CD4-positive, alpha-beta memory T cell (primary cell): ENCODE measurements at regions of chr5 and their contacts with region 1.

Region 1: GRCh38 chr5:39217365-39218281 is 1.7 kb downstream of the FYB1 start:
- DNase-seq: peak; percentile 83 to 86 (median 84)
- H3K4me3 ChIP-seq: peak overlapping the region; percentile 33 to 64
- H3K4me3 Mint-ChIP-seq: peak overlapping the region; percentile 80 to 90 (median 86)
- H3K27ac ChIP-seq: peak overlapping the region; percentile 62
- H3K27ac Mint-ChIP-seq: peak overlapping the region; percentile 87 to 96 (median 93)
- H3K4me1 ChIP-seq: peaks cover 68% of the 10 kb centered on the region
- H3K4me1 Mint-ChIP-seq: peaks cover 54 to 71% (median 65%) of the 10 kb centered on the region in 4 donors
- H3K27me3 ChIP-seq: no peaks in the 10 kb centered on the region
- H3K27me3 Mint-ChIP-seq: no peaks in the 10 kb centered on the region

Region 2: DNA sequence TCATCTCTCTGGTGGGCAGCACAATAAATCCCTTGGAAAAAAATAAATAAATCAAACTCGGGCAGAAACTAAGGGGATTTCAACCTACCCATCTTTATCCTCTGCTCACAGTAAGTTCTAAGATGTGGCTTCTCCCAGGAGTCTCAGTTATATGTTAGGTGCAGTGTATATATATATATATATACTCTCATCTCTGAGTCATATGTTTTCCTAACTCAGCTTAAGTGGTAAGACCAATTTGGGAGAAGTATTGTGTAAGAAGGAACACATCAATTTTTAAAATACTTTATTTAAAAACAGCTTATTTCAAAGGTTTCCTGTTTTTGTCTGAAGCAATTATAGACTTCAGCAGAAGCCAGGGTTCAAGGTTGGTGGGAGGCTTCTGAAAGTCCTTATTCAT is 392.1 kb before region 1 on chr5:
- CTCF ChIA-PET with region 1: no interaction called
- POLR2A ChIA-PET with region 1: no interaction called
- intact Hi-C with region 1: no loop called
- DNase-seq: no peak
- H3K4me3 ChIP-seq: no peak overlapping the region
- H3K4me3 Mint-ChIP-seq: no peak overlapping the region
- H3K27ac ChIP-seq: no peak overlapping the region
- H3K27ac Mint-ChIP-seq: no peak overlapping the region
- H3K4me1 ChIP-seq: no peaks in the 10 kb centered on the region
- H3K4me1 Mint-ChIP-seq: peaks cover 0 to 2% (median 0%) of the 10 kb centered on the region in 4 donors
- H3K27me3 ChIP-seq: no peaks in the 10 kb centered on the region
- H3K27me3 Mint-ChIP-seq: peaks cover 10 to 15% of the 10 kb centered on the region in 2 donors

Region 3: GRCh38 chr5:39117401-39117800 is 100.2 kb before region 1 on chr5:
- CTCF ChIA-PET with region 1: interaction called, 11 read pairs
- POLR2A ChIA-PET with region 1: no interaction called
- intact Hi-C with region 1: no loop called
- DNase-seq: no peak
- H3K4me3 ChIP-seq: no peak overlapping the region
- H3K4me3 Mint-ChIP-seq: no peak overlapping the region
- H3K27ac ChIP-seq: no peak overlapping the region
- H3K27ac Mint-ChIP-seq: peak overlapping the region in 6 of 7 donors; percentile 61 to 78 (median 70)
- H3K4me1 ChIP-seq: peaks cover 26% of the 10 kb centered on the region
- H3K4me1 Mint-ChIP-seq: peaks cover 20 to 44% (median 27%) of the 10 kb centered on the region in 4 donors
- H3K27me3 ChIP-seq: no peaks in the 10 kb centered on the region
- H3K27me3 Mint-ChIP-seq: no peaks in the 10 kb centered on the region

Region 4: DNA sequence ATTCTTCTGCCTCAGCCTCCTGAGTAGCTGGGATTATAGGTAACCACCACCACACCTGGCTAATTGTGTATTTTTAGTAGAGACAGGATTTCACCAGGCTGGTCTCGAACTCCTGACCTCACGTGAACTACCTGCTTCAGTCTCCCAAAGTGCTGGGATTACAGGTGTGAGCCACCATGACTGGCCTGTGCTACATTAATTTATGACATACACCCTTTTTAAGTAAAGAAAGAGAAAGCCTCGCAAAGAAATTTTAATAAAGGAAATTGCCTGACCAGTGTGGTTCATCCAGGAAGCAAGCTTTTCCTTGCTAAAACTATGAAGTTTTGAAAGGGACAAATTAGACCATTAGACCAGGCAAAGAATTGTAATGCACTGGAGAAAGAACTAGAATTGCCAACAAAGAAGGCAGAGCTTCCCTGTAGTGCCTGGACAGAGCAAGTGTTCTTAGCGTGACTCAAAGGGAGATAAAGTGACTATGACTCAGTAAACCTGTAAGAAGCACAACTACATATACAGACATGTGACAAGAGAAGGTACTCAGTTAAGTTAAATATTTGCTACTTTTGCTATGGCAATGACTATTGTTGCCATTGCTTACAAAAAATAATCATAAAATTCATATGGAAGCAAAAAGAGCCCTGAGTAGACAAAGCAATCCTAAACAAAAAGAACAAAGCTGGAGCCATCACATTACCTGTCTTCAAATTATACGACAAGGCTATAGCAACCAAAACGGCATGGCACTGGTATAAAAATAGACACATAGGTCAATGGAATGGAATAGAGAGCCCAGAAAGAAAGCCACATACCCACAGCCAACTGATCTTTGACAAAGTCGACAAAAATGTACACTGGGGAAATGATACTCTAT is 52.9 kb before region 1 on chr5:
- CTCF ChIA-PET with region 1: interaction called, 41 read pairs
- POLR2A ChIA-PET with region 1: interaction called, 1,810 read pairs
- intact Hi-C with region 1: no loop called
- DNase-seq: peak in 2 of 5 donors; percentile 37 to 62
- H3K4me3 ChIP-seq: peak overlapping the region in 1 of 2 donors; percentile 34
- H3K4me3 Mint-ChIP-seq: peak overlapping the region; percentile 42 to 83 (median 78)
- H3K27ac ChIP-seq: peak overlapping the region; percentile 54
- H3K27ac Mint-ChIP-seq: peak overlapping the region; percentile 87 to 94 (median 94)
- H3K4me1 ChIP-seq: peaks cover 100% of the 10 kb centered on the region
- H3K4me1 Mint-ChIP-seq: peaks cover 68 to 96% (median 80%) of the 10 kb centered on the region in 4 donors
- H3K27me3 ChIP-seq: no peaks in the 10 kb centered on the region
- H3K27me3 Mint-ChIP-seq: no peaks in the 10 kb centered on the region

Region 5: GRCh38 chr5:39194466-39195136 is 23.0 kb before region 1 on chr5:
- CTCF ChIA-PET with region 1: interaction called, 313 read pairs
- POLR2A ChIA-PET with region 1: interaction called, 534 read pairs
- intact Hi-C with region 1: loop called (anchors 1 kb)
- DNase-seq: no peak
- H3K4me3 ChIP-seq: peak overlapping the region; percentile 13 to 49
- H3K4me3 Mint-ChIP-seq: peak overlapping the region; percentile 84 to 92 (median 88)
- H3K27ac ChIP-seq: peak overlapping the region; percentile 59
- H3K27ac Mint-ChIP-seq: peak overlapping the region; percentile 90 to 98 (median 95)
- H3K4me1 ChIP-seq: peaks cover 77% of the 10 kb centered on the region
- H3K4me1 Mint-ChIP-seq: peaks cover 53 to 79% (median 66%) of the 10 kb centered on the region in 4 donors
- H3K27me3 ChIP-seq: no peaks in the 10 kb centered on the region
- H3K27me3 Mint-ChIP-seq: no peaks in the 10 kb centered on the region

Region 6: GRCh38 chr5:39238366-39239105 is 20.9 kb after region 1 on chr5:
- CTCF ChIA-PET with region 1: interaction called, 10 read pairs
- POLR2A ChIA-PET with region 1: interaction called, 3 read pairs
- intact Hi-C with region 1: no loop called
- DNase-seq: no peak
- H3K4me3 ChIP-seq: no peak overlapping the region
- H3K4me3 Mint-ChIP-seq: no peak overlapping the region
- H3K27ac ChIP-seq: no peak overlapping the region
- H3K27ac Mint-ChIP-seq: peak overlapping the region in 2 of 7 donors; percentile 8 to 37
- H3K4me1 ChIP-seq: no peaks in the 10 kb centered on the region
- H3K4me1 Mint-ChIP-seq: peaks cover 6 to 12% (median 9%) of the 10 kb centered on the region in 4 donors
- H3K27me3 ChIP-seq: no peaks in the 10 kb centered on the region
- H3K27me3 Mint-ChIP-seq: no peaks in the 10 kb centered on the region

Region 7: GRCh38 chr5:39264528-39264927 is 46.9 kb after region 1 on chr5:
- CTCF ChIA-PET with region 1: interaction called, 108 read pairs
- POLR2A ChIA-PET with region 1: interaction called, 20 read pairs
- intact Hi-C with region 1: no loop called
- DNase-seq: no peak
- H3K4me3 ChIP-seq: no peak overlapping the region
- H3K4me3 Mint-ChIP-seq: peak overlapping the region in 5 of 8 donors; percentile 33 to 70 (median 48)
- H3K27ac ChIP-seq: no peak overlapping the region
- H3K27ac Mint-ChIP-seq: peak overlapping the region in 4 of 7 donors; percentile 32 to 83 (median 54)
- H3K4me1 ChIP-seq: peaks cover 6% of the 10 kb centered on the region
- H3K4me1 Mint-ChIP-seq: peaks cover 6 to 17% (median 11%) of the 10 kb centered on the region in 4 donors
- H3K27me3 ChIP-seq: no peaks in the 10 kb centered on the region
- H3K27me3 Mint-ChIP-seq: no peaks in the 10 kb centered on the region

Region 8: GRCh38 chr5:39314591-39314990 is 97.0 kb after region 1 on chr5:
- CTCF ChIA-PET with region 1: no interaction called
- POLR2A ChIA-PET with region 1: no interaction called
- intact Hi-C with region 1: no loop called
- DNase-seq: no peak
- H3K4me3 ChIP-seq: no peak overlapping the region
- H3K4me3 Mint-ChIP-seq: no peak overlapping the region
- H3K27ac ChIP-seq: no peak overlapping the region
- H3K27ac Mint-ChIP-seq: no peak overlapping the region
- H3K4me1 ChIP-seq: no peaks in the 10 kb centered on the region
- H3K4me1 Mint-ChIP-seq: peaks cover 0 to 3% (median 0%) of the 10 kb centered on the region in 4 donors
- H3K27me3 ChIP-seq: peaks cover 8% of the 10 kb centered on the region
- H3K27me3 Mint-ChIP-seq: peaks cover 6 to 12% of the 10 kb centered on the region in 2 donors

Region 9: GRCh38 chr5:39376293-39376714 is 158.7 kb after region 1 on chr5:
- CTCF ChIA-PET with region 1: interaction called, 16 read pairs
- POLR2A ChIA-PET with region 1: interaction called, 3 read pairs
- intact Hi-C with region 1: loop called (anchors 2 kb)
- DNase-seq: peak; percentile 30 to 46 (median 34)
- H3K4me3 ChIP-seq: no peak overlapping the region
- H3K4me3 Mint-ChIP-seq: no peak overlapping the region
- H3K27ac ChIP-seq: no peak overlapping the region
- H3K27ac Mint-ChIP-seq: no peak overlapping the region
- H3K4me1 ChIP-seq: no peaks in the 10 kb centered on the region
- H3K4me1 Mint-ChIP-seq: peaks cover 0 to 8% (median 4%) of the 10 kb centered on the region in 4 donors
- H3K27me3 ChIP-seq: no peaks in the 10 kb centered on the region
- H3K27me3 Mint-ChIP-seq: peaks cover 6 to 15% of the 10 kb centered on the region in 2 donors